ENCODE measurements at regions of chr3 and their contacts with region 1.

Region 1: DNA sequence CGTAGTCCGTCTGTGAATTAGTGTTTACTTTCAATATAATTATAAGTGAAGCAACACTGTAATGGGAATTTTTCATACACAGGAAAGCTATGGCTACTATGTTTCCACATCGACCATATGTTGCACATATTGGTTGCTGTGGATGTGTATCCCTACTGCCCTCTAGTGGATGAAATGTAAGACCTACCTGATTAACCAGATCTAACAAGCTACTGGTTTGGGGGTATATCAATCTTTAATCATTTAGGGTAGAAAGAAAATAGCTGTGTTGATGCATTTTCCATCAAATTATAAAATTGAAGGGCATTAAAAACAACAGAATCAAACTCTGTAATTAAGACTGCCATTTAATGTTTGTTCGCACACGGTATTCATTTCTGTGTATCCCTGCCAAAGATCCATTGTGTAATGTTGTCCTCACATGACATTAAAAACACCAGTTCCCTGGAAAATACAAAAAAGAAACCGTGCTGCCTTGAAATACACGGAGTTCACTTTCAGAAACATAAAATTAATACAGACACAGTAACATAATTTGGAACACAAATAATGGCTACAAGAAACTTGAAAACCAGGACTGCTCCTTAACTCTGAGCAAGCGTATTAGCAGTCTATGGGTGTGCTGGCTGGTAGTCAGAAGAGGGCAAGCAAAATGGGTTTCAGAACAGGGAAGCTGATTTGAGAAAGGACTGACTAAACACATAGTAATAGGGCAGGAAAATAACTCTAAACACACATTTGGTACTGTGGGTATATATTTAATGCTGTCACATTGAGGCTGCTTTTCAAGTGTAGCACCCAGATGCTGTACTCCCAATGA is 125.1 kb downstream of the TIGIT start:
- DNase-seq: peak in 2 of 5 donors; percentile 58 to 59
- H3K4me3 ChIP-seq: no peak overlapping the region
- H3K4me3 Mint-ChIP-seq: no peak overlapping the region
- H3K27ac ChIP-seq: no peak overlapping the region
- H3K27ac Mint-ChIP-seq: peak overlapping the region in 1 of 8 donors; percentile 52
- H3K4me1 ChIP-seq: peaks cover 6% of the 10 kb centered on the region
- H3K4me1 Mint-ChIP-seq: peaks cover 6 to 10% (median 9%) of the 10 kb centered on the region in 3 donors
- H3K27me3 ChIP-seq: no peaks in the 10 kb centered on the region
- H3K27me3 Mint-ChIP-seq: no peaks in the 10 kb centered on the region

Region 2: GRCh38 chr3:114152519-114153151 is 266.3 kb before region 1 on chr3:
- CTCF ChIA-PET with region 1: interaction called, 79 read pairs
- POLR2A ChIA-PET with region 1: no interaction called
- DNase-seq: peak; percentile 74 to 89 (median 76)
- H3K4me3 ChIP-seq: peak overlapping the region; percentile 44
- H3K4me3 Mint-ChIP-seq: peak overlapping the region; percentile 56 to 89 (median 68)
- H3K27ac ChIP-seq: no peak overlapping the region
- H3K27ac Mint-ChIP-seq: peak overlapping the region in 6 of 8 donors; percentile 35 to 77 (median 46)
- H3K4me1 ChIP-seq: peaks cover 7% of the 10 kb centered on the region
- H3K4me1 Mint-ChIP-seq: peaks cover 10 to 19% (median 15%) of the 10 kb centered on the region in 3 donors
- H3K27me3 ChIP-seq: no peaks in the 10 kb centered on the region
- H3K27me3 Mint-ChIP-seq: no peaks in the 10 kb centered on the region

Region 3: DNA sequence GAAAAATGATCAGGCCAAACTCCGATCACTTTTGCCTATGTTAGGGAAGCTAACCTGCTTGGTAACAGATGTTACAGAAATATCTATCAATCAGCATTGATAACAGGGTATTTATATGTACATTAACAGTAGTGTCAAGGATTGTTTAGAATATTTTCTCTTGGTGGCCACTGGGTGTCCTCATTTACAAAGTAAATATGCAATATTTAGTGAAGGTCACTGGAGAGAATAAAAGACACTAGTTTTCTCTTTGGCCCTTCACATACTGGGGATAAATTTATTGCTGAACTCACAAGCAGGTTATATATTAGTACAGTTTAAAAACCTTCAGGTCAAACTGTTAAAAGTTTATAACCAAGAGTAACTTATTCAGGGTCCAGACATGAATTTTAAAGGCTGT is 56.1 kb before region 1 on chr3:
- CTCF ChIA-PET with region 1: interaction called, 10 read pairs
- POLR2A ChIA-PET with region 1: no interaction called
- DNase-seq: no peak
- H3K4me3 ChIP-seq: no peak overlapping the region
- H3K4me3 Mint-ChIP-seq: no peak overlapping the region
- H3K27ac ChIP-seq: no peak overlapping the region
- H3K27ac Mint-ChIP-seq: peak overlapping the region in 2 of 8 donors; percentile 14 to 57
- H3K4me1 ChIP-seq: no peaks in the 10 kb centered on the region
- H3K4me1 Mint-ChIP-seq: peaks cover 0 to 6% (median 0%) of the 10 kb centered on the region in 3 donors
- H3K27me3 ChIP-seq: no peaks in the 10 kb centered on the region
- H3K27me3 Mint-ChIP-seq: no peaks in the 10 kb centered on the region

Region 4: GRCh38 chr3:114383875-114384557 is 34.9 kb before region 1 on chr3:
- CTCF ChIA-PET with region 1: interaction called, 14 read pairs
- POLR2A ChIA-PET with region 1: no interaction called
- DNase-seq: peak; percentile 38 to 72 (median 47)
- H3K4me3 ChIP-seq: peak overlapping the region; percentile 39
- H3K4me3 Mint-ChIP-seq: peak overlapping the region in 4 of 7 donors; percentile 68 to 90 (median 82)
- H3K27ac ChIP-seq: no peak overlapping the region
- H3K27ac Mint-ChIP-seq: peak overlapping the region in 5 of 8 donors; percentile 1 to 94 (median 48)
- H3K4me1 ChIP-seq: peaks cover 7% of the 10 kb centered on the region
- H3K4me1 Mint-ChIP-seq: peaks cover 9 to 18% (median 15%) of the 10 kb centered on the region in 3 donors
- H3K27me3 ChIP-seq: no peaks in the 10 kb centered on the region
- H3K27me3 Mint-ChIP-seq: no peaks in the 10 kb centered on the region

Region 5: GRCh38 chr3:114730397-114730796 is 311.5 kb after region 1 on chr3:
- CTCF ChIA-PET with region 1: no interaction called
- POLR2A ChIA-PET with region 1: no interaction called
- DNase-seq: no peak
- H3K4me3 ChIP-seq: no peak overlapping the region
- H3K4me3 Mint-ChIP-seq: no peak overlapping the region
- H3K27ac ChIP-seq: no peak overlapping the region
- H3K27ac Mint-ChIP-seq: no peak overlapping the region
- H3K4me1 ChIP-seq: no peaks in the 10 kb centered on the region
- H3K4me1 Mint-ChIP-seq: peaks cover under 1 to 19% (median 3%) of the 10 kb centered on the region in 3 donors
- H3K27me3 ChIP-seq: no peaks in the 10 kb centered on the region
- H3K27me3 Mint-ChIP-seq: no peaks in the 10 kb centered on the region

Measured in CD8-positive, alpha-beta memory T cell (primary cell).